ENCODE measurements at regions of chr13 and their contacts with region 1.

Region 1: DNA sequence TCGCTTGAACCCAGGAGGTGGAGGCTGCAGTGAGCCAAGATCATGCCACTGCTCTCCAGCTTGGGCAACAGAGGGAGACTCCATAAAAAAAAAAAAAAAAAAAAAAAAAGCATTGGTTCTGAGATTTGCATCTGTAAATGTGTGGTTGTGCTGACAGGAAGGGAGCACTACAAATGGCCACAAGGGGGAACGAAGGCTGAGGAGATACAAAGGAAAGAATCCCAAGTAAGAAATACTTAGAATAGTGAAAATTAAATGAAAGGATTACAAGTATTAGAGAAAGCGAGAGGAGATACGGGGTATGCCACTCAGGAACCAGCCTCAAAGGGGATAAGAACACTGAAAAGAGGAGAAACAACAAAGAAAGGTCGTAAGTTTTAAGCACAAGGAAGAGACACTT is 284.9 kb downstream of the KLF12 start:
- DNase-seq: peak in 5 of 9 experiments; percentile 20 to 63 (median 24)
- ATAC-seq: peak; percentile 57
- H3K4me3 ChIP-seq: no peak overlapping the region
- H3K4me3 Mint-ChIP-seq: no peak overlapping the region
- H3K27ac ChIP-seq: no peak overlapping the region
- H3K27ac Mint-ChIP-seq: peak overlapping the region; percentile 60
- H3K4me1 ChIP-seq: peaks cover 4% of the 10 kb centered on the region
- H3K4me1 Mint-ChIP-seq: peaks cover 59% of the 10 kb centered on the region
- H3K27me3 ChIP-seq: no peaks in the 10 kb centered on the region
- H3K27me3 Mint-ChIP-seq: no peaks in the 10 kb centered on the region
- CTCF ChIP-seq: peak; percentile 47

Region 2: DNA sequence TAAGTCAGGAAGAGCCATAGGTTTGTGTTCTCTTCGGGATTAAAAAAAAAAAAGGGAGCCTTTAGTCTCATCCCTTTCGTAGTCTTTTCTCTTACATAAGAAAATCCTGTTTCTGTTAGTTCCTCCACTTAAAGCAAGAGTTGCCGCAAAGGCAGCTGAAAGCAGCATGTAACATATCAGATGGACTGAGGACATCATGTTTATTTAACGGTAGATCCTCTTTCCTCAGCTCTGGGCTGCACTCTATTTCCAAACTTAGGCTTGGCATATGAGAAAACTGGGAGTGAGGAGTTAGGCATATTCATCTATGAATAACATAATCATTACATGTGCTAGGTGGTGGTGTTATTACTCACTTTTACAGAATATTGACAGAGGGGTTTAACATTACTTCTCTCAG is 106.3 kb before region 1 on chr13:
- CTCF ChIA-PET with region 1: interaction called, 3 read pairs
- POLR2A ChIA-PET with region 1: no interaction called
- intact Hi-C with region 1: loop called in 1 of 2 experiments (anchors 5 kb)
- DNase-seq: no peak
- ATAC-seq: no peak
- H3K4me3 ChIP-seq: no peak overlapping the region
- H3K4me3 Mint-ChIP-seq: no peak overlapping the region
- H3K27ac ChIP-seq: no peak overlapping the region
- H3K27ac Mint-ChIP-seq: peak overlapping the region; percentile 52
- H3K4me1 ChIP-seq: peaks cover 28% of the 10 kb centered on the region
- H3K4me1 Mint-ChIP-seq: peaks cover 53% of the 10 kb centered on the region
- H3K27me3 ChIP-seq: no peaks in the 10 kb centered on the region
- H3K27me3 Mint-ChIP-seq: no peaks in the 10 kb centered on the region
- CTCF ChIP-seq: no peak

Region 3: GRCh38 chr13:73820688-73821087 is 28.6 kb before region 1 on chr13:
- CTCF ChIA-PET with region 1: no interaction called
- POLR2A ChIA-PET with region 1: no interaction called
- intact Hi-C with region 1: no loop called
- DNase-seq: no peak
- ATAC-seq: no peak
- H3K4me3 ChIP-seq: no peak overlapping the region
- H3K4me3 Mint-ChIP-seq: no peak overlapping the region
- H3K27ac ChIP-seq: no peak overlapping the region
- H3K27ac Mint-ChIP-seq: peak overlapping the region; percentile 10
- H3K4me1 ChIP-seq: peaks cover 5% of the 10 kb centered on the region
- H3K4me1 Mint-ChIP-seq: peaks cover 56% of the 10 kb centered on the region
- H3K27me3 ChIP-seq: no peaks in the 10 kb centered on the region
- H3K27me3 Mint-ChIP-seq: no peaks in the 10 kb centered on the region
- CTCF ChIP-seq: no peak

Region 4: GRCh38 chr13:73861136-73861535 is 11.8 kb after region 1 on chr13:
- CTCF ChIA-PET with region 1: interaction called, 4 read pairs
- POLR2A ChIA-PET with region 1: interaction called, 3 read pairs
- intact Hi-C with region 1: loop called in 1 of 2 experiments (anchors 2 kb)
- DNase-seq: peak in 2 of 9 experiments; percentile 7 to 41
- ATAC-seq: no peak
- H3K4me3 ChIP-seq: no peak overlapping the region
- H3K4me3 Mint-ChIP-seq: no peak overlapping the region
- H3K27ac ChIP-seq: no peak overlapping the region
- H3K27ac Mint-ChIP-seq: peak overlapping the region; percentile 50
- H3K4me1 ChIP-seq: peaks cover 13% of the 10 kb centered on the region
- H3K4me1 Mint-ChIP-seq: peaks cover 48% of the 10 kb centered on the region
- H3K27me3 ChIP-seq: no peaks in the 10 kb centered on the region
- H3K27me3 Mint-ChIP-seq: no peaks in the 10 kb centered on the region
- CTCF ChIP-seq: no peak

Region 5: GRCh38 chr13:75050419-75051046 is 1201.2 kb after region 1 on chr13:
- CTCF ChIA-PET with region 1: no interaction called
- POLR2A ChIA-PET with region 1: no interaction called
- intact Hi-C with region 1: no loop called
- DNase-seq: no peak
- ATAC-seq: no peak
- H3K4me3 ChIP-seq: no peak overlapping the region
- H3K4me3 Mint-ChIP-seq: no peak overlapping the region
- H3K27ac ChIP-seq: no peak overlapping the region
- H3K27ac Mint-ChIP-seq: no peak overlapping the region
- H3K4me1 ChIP-seq: no peaks in the 10 kb centered on the region
- H3K4me1 Mint-ChIP-seq: no peaks in the 10 kb centered on the region
- H3K27me3 ChIP-seq: no peaks in the 10 kb centered on the region
- H3K27me3 Mint-ChIP-seq: peaks cover 7% of the 10 kb centered on the region
- CTCF ChIP-seq: no peak